Caco-2 (cell line): ENCODE measurements at regions of chr14 and their contacts with region 1.

Region 1: GRCh38 chr14:49892636-49893308 is at the start of gene ARF6:
- DNase-seq: peak; percentile 98 to 99
- H3K4me3 ChIP-seq: peak within 1 kb of the TSS; percentile 84
- H3K4me3 Mint-ChIP-seq: peak within 1 kb of the TSS; percentile 91
- H3K27ac Mint-ChIP-seq: peak within 1 kb of the TSS; percentile 98
- H3K4me1 ChIP-seq: peaks cover 18% of the 10 kb centered on the region
- H3K4me1 Mint-ChIP-seq: peaks cover 32% of the 10 kb centered on the region
- H3K27me3 ChIP-seq: no peaks in the 10 kb centered on the region
- H3K27me3 Mint-ChIP-seq: no peaks in the 10 kb centered on the region
- CTCF ChIP-seq: no peak
- total RNA-seq, gene ARF6: 58.1 and 58.8 TPM in 2 replicates

Region 2: DNA sequence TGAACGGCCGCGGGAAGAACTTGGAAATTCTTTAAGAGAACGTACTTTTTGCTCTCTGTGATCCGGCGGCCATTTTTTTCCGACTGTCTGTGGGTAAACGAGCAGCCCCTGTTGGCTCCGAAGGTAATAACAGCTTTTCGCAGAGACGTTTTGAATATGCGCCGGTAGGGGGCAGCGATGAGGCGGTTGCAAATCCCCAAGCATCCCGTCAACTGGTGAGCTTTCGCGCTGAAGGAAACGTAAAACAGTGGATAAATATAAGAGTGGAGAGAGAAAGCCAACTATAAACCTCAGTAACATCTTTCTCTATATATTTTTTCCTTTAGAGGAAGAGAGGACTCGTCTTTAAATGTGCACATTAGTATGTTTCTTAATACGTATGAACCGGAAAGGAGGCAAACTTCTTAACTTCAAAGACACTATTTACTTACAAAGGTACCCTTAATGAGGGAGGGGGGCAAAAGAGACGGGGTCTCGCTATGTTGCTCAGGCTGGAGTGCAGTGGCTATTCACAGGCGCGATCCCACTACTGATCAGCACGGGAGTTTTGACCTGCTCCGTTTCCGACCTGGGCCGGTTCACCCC is 30.6 kb before region 1 on chr14:
- CTCF ChIA-PET with region 1: interaction called, 3 read pairs
- POLR2A ChIA-PET with region 1: interaction called, 12 read pairs
- intact Hi-C with region 1: loop called (anchors 2 kb)
- DNase-seq: peak; percentile 77 to 84
- H3K4me3 ChIP-seq: peak overlapping the region; percentile 69
- H3K4me3 Mint-ChIP-seq: no peak overlapping the region
- H3K27ac Mint-ChIP-seq: no peak overlapping the region
- H3K4me1 ChIP-seq: peaks cover 5% of the 10 kb centered on the region; the same call in 1 of the 2 replicates
- H3K4me1 Mint-ChIP-seq: peaks cover 11% of the 10 kb centered on the region
- H3K27me3 ChIP-seq: no peaks in the 10 kb centered on the region
- H3K27me3 Mint-ChIP-seq: peaks cover 3% of the 10 kb centered on the region
- CTCF ChIP-seq: peak; percentile 100

Region 3: GRCh38 chr14:49867831-49868723 is 24.7 kb before region 1 on chr14:
- CTCF ChIA-PET with region 1: interaction called, 3 read pairs
- POLR2A ChIA-PET with region 1: interaction called, 12 read pairs
- intact Hi-C with region 1: loop called (anchors 1 kb)
- DNase-seq: peak; percentile 94 to 97
- H3K4me3 ChIP-seq: peak overlapping the region; percentile 47
- H3K4me3 Mint-ChIP-seq: peak overlapping the region; percentile 95
- H3K27ac Mint-ChIP-seq: peak overlapping the region; percentile 89
- H3K4me1 ChIP-seq: peaks cover 11% of the 10 kb centered on the region
- H3K4me1 Mint-ChIP-seq: peaks cover 5% of the 10 kb centered on the region
- H3K27me3 ChIP-seq: no peaks in the 10 kb centered on the region
- H3K27me3 Mint-ChIP-seq: no peaks in the 10 kb centered on the region
- CTCF ChIP-seq: no peak

Region 4: DNA sequence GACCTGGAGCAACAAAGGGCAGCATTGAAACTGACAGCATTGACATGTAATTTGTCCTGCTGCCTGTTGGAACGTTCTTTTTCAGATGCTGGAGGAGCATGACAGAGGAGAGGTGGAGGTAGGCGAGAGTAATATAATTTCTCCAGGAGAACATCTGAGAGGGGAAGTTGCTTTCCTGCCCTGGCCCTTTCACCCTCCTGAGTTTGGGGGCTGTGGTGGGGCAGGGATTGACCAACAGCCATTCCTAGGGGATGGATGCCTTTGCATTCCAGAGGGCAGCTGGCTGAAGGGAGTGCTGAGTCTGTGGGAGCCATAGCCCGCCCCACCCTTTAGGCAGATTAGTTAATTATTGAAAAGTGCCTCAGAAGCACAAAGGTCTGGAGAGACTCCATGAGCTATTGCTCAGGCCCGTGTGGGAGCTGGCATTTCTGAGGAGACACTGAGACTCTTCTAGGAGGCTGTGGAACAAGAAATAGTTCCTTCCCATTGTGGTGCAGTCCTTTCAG is 73.6 kb after region 1 on chr14:
- CTCF ChIA-PET with region 1: no interaction called
- POLR2A ChIA-PET with region 1: interaction called, 5 read pairs
- intact Hi-C with region 1: loop called (anchors 1 kb)
- DNase-seq: peak; percentile 86 to 91
- H3K4me3 ChIP-seq: 0 out of 2 replicates have a peak overlapping the region, but pooled peaks have one; percentile 1
- H3K4me3 Mint-ChIP-seq: peak overlapping the region; percentile 61
- H3K27ac Mint-ChIP-seq: peak overlapping the region; percentile 89
- H3K4me1 ChIP-seq: peaks cover 53% of the 10 kb centered on the region
- H3K4me1 Mint-ChIP-seq: peaks cover 61% of the 10 kb centered on the region
- H3K27me3 ChIP-seq: no peaks in the 10 kb centered on the region
- H3K27me3 Mint-ChIP-seq: no peaks in the 10 kb centered on the region
- CTCF ChIP-seq: no peak

Region 5: DNA sequence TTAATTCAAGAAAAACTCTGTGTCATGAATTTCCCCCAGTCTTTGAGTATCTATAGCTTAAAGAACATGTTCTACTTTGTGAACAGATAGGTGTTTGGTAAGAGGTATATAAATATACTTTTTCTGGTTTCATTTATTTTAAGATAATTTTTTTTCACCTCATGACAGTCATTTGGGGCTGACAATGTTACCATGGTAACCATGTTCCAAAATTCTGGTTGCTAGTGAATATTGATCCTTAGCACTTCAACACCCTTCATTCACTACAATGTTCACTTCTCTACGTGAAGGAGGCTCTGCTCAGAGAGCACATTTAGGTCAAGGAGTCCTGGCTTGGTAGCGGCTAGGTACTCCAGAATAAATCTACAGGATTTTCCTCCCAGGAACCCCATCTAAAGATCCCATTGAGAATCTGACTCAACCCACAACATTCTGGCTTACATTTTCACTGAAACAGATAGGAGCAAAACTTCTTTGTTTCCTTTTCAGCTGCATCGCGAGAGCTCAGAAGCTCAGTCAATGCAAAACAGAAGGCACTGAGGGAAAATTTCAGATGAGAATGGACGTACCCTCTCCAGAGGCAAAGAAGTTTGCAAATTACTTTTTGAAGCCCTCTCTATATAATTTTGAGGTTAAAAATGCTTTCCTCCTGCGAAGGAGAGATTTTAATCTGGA is 93.7 kb after region 1 on chr14:
- CTCF ChIA-PET with region 1: no interaction called
- POLR2A ChIA-PET with region 1: interaction called, 3 read pairs
- intact Hi-C with region 1: loop called (anchors 1 kb)
- DNase-seq: no peak
- H3K4me3 ChIP-seq: no peak overlapping the region
- H3K4me3 Mint-ChIP-seq: peak overlapping the region; percentile 47
- H3K27ac Mint-ChIP-seq: peak overlapping the region; percentile 90
- H3K4me1 ChIP-seq: peaks cover 61% of the 10 kb centered on the region
- H3K4me1 Mint-ChIP-seq: peaks cover 46% of the 10 kb centered on the region
- H3K27me3 ChIP-seq: no peaks in the 10 kb centered on the region
- H3K27me3 Mint-ChIP-seq: no peaks in the 10 kb centered on the region
- CTCF ChIP-seq: no peak

Region 6: GRCh38 chr14:50060871-50061663 is 168.3 kb after region 1 on chr14:
- CTCF ChIA-PET with region 1: no interaction called
- POLR2A ChIA-PET with region 1: interaction called, 4 read pairs
- intact Hi-C with region 1: loop called (anchors 1 kb)
- DNase-seq: peak; percentile 74 to 75
- H3K4me3 ChIP-seq: no peak overlapping the region
- H3K4me3 Mint-ChIP-seq: no peak overlapping the region
- H3K27ac Mint-ChIP-seq: peak overlapping the region; percentile 89
- H3K4me1 ChIP-seq: peaks cover 76% of the 10 kb centered on the region
- H3K4me1 Mint-ChIP-seq: peaks cover 26% of the 10 kb centered on the region
- H3K27me3 ChIP-seq: no peaks in the 10 kb centered on the region
- H3K27me3 Mint-ChIP-seq: no peaks in the 10 kb centered on the region
- CTCF ChIP-seq: peak; percentile 9 to 28

Region 7: DNA sequence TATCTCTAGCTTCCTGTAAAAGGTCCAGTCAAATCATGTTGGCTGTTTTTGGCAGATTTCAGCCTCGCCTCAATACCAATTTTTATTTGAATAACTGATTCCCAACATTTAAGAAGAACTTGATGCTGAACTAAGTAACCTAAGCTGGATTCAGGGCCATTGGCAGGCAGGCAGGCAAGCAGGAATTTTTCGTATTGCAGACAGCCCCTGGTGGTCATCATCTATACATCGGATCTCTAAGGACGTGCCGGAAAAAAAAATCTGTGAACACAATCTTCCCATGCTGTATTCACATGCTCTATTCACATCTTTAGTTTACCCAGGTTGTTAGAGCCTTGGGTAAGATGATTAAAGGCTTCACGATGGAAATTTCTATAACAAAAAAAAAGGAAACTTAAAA is 216.6 kb after region 1 on chr14:
- CTCF ChIA-PET with region 1: interaction called, 3 read pairs
- POLR2A ChIA-PET with region 1: no interaction called
- intact Hi-C with region 1: loop called (anchors 10 kb)
- DNase-seq: peak in 1 of 2 experiments; percentile 40
- H3K4me3 ChIP-seq: no peak overlapping the region
- H3K4me3 Mint-ChIP-seq: no peak overlapping the region
- H3K27ac Mint-ChIP-seq: no peak overlapping the region
- H3K4me1 ChIP-seq: peaks cover 3% of the 10 kb centered on the region; the same call in 1 of the 2 replicates
- H3K4me1 Mint-ChIP-seq: no peaks in the 10 kb centered on the region
- H3K27me3 ChIP-seq: no peaks in the 10 kb centered on the region
- H3K27me3 Mint-ChIP-seq: no peaks in the 10 kb centered on the region
- CTCF ChIP-seq: peak; percentile 50 to 57